ENCODE measurements at regions of chr18 and their contacts with region 1.

Region 1: GRCh38 chr18:46917108-46917802 is at the starts of genes KATNAL2 and PIAS2:
- DNase-seq: peak; percentile 82 to 91 (median 86)
- H3K4me3 ChIP-seq: peak within 1 kb of the TSS; percentile 76 to 95 (median 88)
- H3K27ac ChIP-seq: peak within 1 kb of the TSS; percentile 46 to 80
- H3K4me1 ChIP-seq: peaks cover 13 to 25% (median 18%) of the 10 kb centered on the region in 4 experiments
- H3K27me3 ChIP-seq: no peaks in the 10 kb centered on the region

Region 2: GRCh38 chr18:46609048-46609447 is 308.2 kb before region 1 on chr18:
- CTCF ChIA-PET with region 1: no interaction called
- POLR2A ChIA-PET with region 1: no interaction called
- DNase-seq: no peak
- H3K4me3 ChIP-seq: no peak overlapping the region
- H3K27ac ChIP-seq: no peak overlapping the region
- H3K4me1 ChIP-seq: no peaks in the 10 kb centered on the region
- H3K27me3 ChIP-seq: no peaks in the 10 kb centered on the region

Region 3: GRCh38 chr18:46736135-46736534 is 181.1 kb before region 1 on chr18:
- CTCF ChIA-PET with region 1: no interaction called
- POLR2A ChIA-PET with region 1: no interaction called
- DNase-seq: no peak
- H3K4me3 ChIP-seq: no peak overlapping the region
- H3K27ac ChIP-seq: no peak overlapping the region
- H3K4me1 ChIP-seq: no peaks in the 10 kb centered on the region
- H3K27me3 ChIP-seq: peaks cover 0 to 8% (median 0%) of the 10 kb centered on the region in 5 experiments

Region 4: GRCh38 chr18:46809145-46809544 is 108.1 kb before region 1 on chr18:
- CTCF ChIA-PET with region 1: no interaction called
- POLR2A ChIA-PET with region 1: no interaction called
- DNase-seq: no peak
- H3K4me3 ChIP-seq: no peak overlapping the region
- H3K27ac ChIP-seq: no peak overlapping the region
- H3K4me1 ChIP-seq: no peaks in the 10 kb centered on the region
- H3K27me3 ChIP-seq: no peaks in the 10 kb centered on the region

Region 5: GRCh38 chr18:46950064-46950656 is 32.9 kb after region 1 on chr18:
- CTCF ChIA-PET with region 1: interaction called, 11 read pairs
- POLR2A ChIA-PET with region 1: interaction called, 6 read pairs
- DNase-seq: peak; percentile 14 to 30 (median 30)
- H3K4me3 ChIP-seq: no peak overlapping the region
- H3K27ac ChIP-seq: no peak overlapping the region
- H3K4me1 ChIP-seq: peaks cover 2 to 6% (median 5%) of the 10 kb centered on the region in 4 experiments
- H3K27me3 ChIP-seq: peaks cover 0 to 2% (median 0%) of the 10 kb centered on the region in 5 experiments